ENCODE measurements at regions of chr9 and their contacts with region 1.

Region 1: GRCh38 chr9:91949946-91950664 is at the start of gene ROR2:
- DNase-seq: peak; percentile 85
- ATAC-seq: peak; percentile 91
- total RNA-seq, gene ROR2: 0.87 TPM

Region 2: GRCh38 chr9:91775011-91775707 is 174.9 kb before region 1 on chr9:
- intact Hi-C with region 1: loop called (anchors 10 kb)
- DNase-seq: peak; percentile 73
- ATAC-seq: peak; percentile 79

Region 3: DNA sequence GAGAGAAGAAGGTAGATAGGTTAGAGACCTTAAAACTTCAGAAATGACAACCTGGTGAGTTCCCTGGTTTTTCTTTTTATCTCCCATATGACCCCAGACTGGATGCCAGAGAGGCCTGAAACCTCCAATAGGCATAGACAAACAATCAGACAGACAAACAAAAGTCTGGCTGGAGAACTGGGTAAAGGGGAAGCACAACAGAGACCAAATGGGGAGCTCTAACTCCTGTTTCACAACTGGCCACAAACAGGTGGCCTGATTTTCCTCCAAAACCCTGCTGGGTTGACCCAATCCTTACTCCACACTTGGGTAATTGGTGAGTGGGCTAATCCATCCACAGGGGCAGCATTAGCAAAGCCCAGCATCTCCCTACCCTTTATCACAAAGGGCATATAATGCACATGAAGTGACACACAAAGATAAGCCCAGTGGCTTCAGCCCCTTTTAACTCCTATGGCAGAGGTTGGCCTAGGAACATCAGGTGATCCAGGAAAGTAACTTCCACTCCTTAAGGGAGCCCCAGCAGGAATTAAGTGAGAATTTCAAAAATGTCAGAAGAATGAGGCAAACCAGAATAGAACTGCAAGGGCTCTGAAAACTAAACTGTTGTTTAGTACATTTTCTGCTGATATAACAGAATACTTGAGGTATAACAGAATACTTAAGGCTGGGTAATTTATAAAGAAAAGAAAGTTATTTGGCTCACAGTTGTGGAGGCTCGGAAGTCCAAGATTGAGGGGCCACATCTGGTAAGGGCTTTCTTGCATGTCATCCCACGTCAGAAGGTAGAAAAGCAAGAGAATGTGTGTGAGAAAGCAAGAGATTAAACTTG is 60.8 kb after region 1 on chr9:
- intact Hi-C with region 1: no loop called
- DNase-seq: no peak
- ATAC-seq: no peak

Region 4: DNA sequence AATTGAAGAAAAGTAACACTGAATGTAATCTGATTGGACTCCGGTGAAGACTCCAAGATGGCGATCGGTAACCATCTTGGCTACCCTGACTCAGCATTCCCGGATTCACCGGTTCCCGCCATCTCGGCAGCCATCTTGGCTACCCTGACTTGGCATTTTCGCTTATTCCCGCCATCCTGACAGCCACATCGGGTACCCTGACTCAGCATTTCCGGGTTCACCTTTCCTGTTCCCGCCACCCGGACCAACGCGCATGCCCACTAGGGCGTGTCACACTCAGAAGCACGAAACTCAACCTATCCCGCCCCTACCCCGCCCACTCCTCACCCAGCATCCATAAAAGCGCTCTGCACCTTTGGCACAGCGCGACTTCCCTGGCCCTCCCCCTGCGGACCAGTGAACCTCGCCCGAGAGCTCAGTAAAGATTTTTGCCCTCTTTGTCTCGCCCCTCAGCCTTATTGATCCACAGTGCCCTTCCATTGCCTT is 147.9 kb after region 1 on chr9:
- intact Hi-C with region 1: no loop called
- DNase-seq: peak; percentile 77
- ATAC-seq: peak; percentile 76

Measured in left ventricle myocardium superior (tissue), 1 donor.